G401 (cell line): ENCODE measurements at regions of chr21 and their contacts with region 1.

Region 1: GRCh38 chr21:33348706-33349105 is 23.9 kb downstream of the IFNAR1 start:
- DNase-seq: peak; percentile 48

Region 2: GRCh38 chr21:33299181-33299752 is 49.4 kb before region 1 on chr21:
- in situ Hi-C with region 1: no loop called
- DNase-seq: no peak

Region 3: DNA sequence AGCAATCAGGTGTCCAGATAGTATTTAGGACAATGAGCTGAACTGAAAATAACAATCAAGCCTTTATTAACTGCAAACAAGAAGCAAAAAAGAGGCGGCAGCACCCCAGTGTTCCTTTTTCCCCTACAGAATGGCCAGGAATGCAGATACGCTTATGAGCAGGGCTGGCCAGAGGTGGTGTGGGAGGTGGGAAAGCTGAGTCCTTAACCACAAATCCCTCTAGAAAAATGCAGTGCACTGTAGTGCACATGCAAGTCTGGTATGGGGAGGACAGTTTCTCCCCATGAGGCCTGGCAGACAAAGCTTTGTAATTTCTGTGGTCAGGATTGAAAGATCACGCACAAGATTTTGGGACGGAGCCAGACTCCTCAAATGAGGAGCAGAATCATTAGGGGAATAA is 34.6 kb before region 1 on chr21:
- in situ Hi-C with region 1: loop called (anchors 5 kb)
- DNase-seq: no peak

Region 4: GRCh38 chr21:33434770-33435360 is 86.2 kb after region 1 on chr21:
- in situ Hi-C with region 1: no loop called
- DNase-seq: no peak